ENCODE measurements at regions of chr20 and their contacts with region 1.

Region 1: GRCh38 chr20:58017237-58017969 is 211.1 kb downstream of the ANKRD60 start:
- DNase-seq: peak; percentile 95
- H3K4me3 ChIP-seq: peak overlapping the region in 1 of 3 experiments; percentile 2
- H3K27ac ChIP-seq: peak overlapping the region; percentile 91
- H3K4me1 ChIP-seq: peaks cover 42% of the 10 kb centered on the region
- H3K27me3 ChIP-seq: no peaks in the 10 kb centered on the region
- CTCF ChIP-seq: no peak

Region 2: DNA sequence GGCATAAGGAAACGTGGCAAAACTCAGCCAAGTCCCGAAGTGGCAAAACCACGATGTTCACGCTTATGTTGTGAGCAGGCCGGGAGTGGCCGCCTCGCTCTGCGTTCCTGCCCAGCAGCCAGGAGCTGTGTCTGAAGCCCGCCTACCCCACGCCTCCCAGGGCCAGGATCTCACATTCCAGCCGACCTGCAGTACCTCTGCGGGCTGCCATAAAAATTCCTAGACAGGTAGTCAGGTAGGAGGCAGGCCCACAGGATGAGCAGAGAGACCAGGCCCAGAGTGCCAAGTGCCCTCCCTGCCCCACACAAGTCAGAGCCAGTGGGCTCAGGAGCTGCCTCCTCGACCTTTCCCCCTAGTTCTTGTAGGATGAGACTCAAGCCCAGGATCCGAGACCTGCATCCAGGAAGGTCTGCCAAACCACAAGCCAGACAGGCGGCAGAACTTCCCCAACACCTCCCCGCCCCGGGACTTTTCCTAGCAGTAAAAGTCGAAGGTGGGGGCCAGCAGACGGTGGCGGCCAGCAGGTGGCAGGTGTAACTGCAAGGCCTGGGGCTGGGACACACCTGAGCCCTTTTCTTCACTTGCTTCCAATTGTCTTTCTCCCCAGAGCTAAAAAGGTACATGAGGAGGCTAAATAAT is 324.3 kb before region 1 on chr20:
- CTCF ChIA-PET with region 1: no interaction called
- dilution Hi-C with region 1: no loop called
- in situ Hi-C with region 1: no loop called
- intact Hi-C with region 1: loop called (anchors 1 kb)
- DNase-seq: peak; percentile 99
- H3K4me3 ChIP-seq: no peak overlapping the region
- H3K27ac ChIP-seq: peak overlapping the region; percentile 88
- H3K4me1 ChIP-seq: peaks cover 93% of the 10 kb centered on the region
- H3K27me3 ChIP-seq: no peaks in the 10 kb centered on the region
- CTCF ChIP-seq: peak; percentile 49 to 69

Region 3: GRCh38 chr20:57921676-57922075 is 95.7 kb before region 1 on chr20:
- CTCF ChIA-PET with region 1: no interaction called
- dilution Hi-C with region 1: no loop called
- in situ Hi-C with region 1: no loop called
- intact Hi-C with region 1: no loop called
- DNase-seq: no peak
- H3K4me3 ChIP-seq: no peak overlapping the region
- H3K27ac ChIP-seq: no peak overlapping the region
- H3K4me1 ChIP-seq: no peaks in the 10 kb centered on the region
- H3K27me3 ChIP-seq: peaks cover 6% of the 10 kb centered on the region
- CTCF ChIP-seq: no peak

Region 4: GRCh38 chr20:58458180-58459057 is 441.0 kb after region 1 on chr20:
- CTCF ChIA-PET with region 1: no interaction called
- dilution Hi-C with region 1: no loop called
- in situ Hi-C with region 1: no loop called
- intact Hi-C with region 1: no loop called
- DNase-seq: peak; percentile 27
- H3K4me3 ChIP-seq: no peak overlapping the region
- H3K27ac ChIP-seq: no peak overlapping the region
- H3K4me1 ChIP-seq: peaks cover 48% of the 10 kb centered on the region
- H3K27me3 ChIP-seq: no peaks in the 10 kb centered on the region
- CTCF ChIP-seq: no peak

Measured in mammary epithelial cell (primary cell).